ENCODE measurements at regions of chr12 and their contacts with region 1.

Region 1: GRCh38 chr12:118183705-118184104 is 47.8 kb downstream of the PEBP1 start:
- DNase-seq: no peak
- ATAC-seq: no peak

Region 2: GRCh38 chr12:118145113-118145797 is 38.5 kb before region 1 on chr12:
- intact Hi-C with region 1: no loop called
- DNase-seq: no peak
- ATAC-seq: no peak

Region 3: DNA sequence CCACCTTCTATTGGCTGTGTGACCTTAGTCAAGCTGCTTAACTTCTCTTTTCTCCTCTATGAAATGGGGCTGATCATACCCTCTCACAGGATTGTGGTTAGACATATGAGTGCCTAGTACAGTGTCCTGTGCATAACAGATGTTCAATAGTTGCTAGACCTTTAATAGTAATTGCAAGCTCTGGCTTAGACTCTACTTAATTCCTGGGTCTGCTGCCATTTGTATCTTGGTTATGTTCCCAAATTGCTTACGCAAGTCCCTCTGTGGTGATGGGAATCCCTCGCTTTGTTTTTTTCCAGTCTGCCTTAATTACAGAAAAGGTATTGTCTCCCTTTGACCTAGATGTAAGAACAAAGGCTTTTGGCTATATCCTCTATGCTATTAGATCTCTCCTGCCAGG is 207.7 kb after region 1 on chr12:
- intact Hi-C with region 1: loop called in 1 of 2 experiments (anchors 5 kb)
- DNase-seq: no peak
- ATAC-seq: peak in 1 of 2 donors; percentile 55